Posterior vena cava (tissue), 2 donors: ENCODE measurements at regions of chr3 and their contacts with region 1.

Region 1: GRCh38 chr3:191470545-191470944 is 9.6 kb downstream of the PYDC2 start:
- DNase-seq: no peak

Region 2: DNA sequence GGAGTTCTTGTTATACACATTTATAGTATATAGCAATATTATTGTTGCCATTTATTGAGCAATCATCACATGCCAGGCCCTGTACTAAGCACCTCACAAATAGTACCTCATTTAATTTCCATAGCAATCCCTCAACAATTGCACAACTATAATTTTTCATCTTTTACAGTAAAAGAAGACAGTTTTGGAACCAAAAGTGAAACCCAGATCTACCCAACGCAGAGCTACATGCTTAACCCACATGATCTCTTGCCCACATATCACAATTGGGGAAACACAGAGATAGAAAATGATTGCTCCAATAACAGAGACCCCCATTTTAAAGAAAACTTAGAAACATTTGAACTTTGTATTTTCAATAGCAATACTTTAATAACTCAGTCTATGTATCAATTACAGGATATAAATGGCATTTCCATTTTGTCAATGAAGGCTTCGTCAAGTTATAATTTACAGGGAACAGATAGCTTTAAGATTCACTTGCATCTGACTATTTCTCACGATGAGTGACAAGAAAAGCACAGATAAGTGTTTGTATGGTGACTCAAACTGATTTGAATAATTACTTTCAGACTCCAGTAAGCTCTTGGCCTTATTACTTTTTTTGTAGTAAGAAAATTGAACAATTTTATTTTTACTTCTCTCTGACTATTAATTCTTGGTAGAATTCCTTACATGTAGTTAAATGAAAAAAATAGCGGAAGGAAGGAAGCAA is 180.1 kb before region 1 on chr3:
- intact Hi-C with region 1: no loop called
- DNase-seq: no peak

Region 3: GRCh38 chr3:192923731-192924130 is 1453.2 kb after region 1 on chr3:
- intact Hi-C with region 1: loop called in 1 of 2 experiments (anchors 5 kb)
- DNase-seq: no peak